GM10248 (cell line): ENCODE measurements at regions of chr2 and their contacts with region 1.

Region 1: DNA sequence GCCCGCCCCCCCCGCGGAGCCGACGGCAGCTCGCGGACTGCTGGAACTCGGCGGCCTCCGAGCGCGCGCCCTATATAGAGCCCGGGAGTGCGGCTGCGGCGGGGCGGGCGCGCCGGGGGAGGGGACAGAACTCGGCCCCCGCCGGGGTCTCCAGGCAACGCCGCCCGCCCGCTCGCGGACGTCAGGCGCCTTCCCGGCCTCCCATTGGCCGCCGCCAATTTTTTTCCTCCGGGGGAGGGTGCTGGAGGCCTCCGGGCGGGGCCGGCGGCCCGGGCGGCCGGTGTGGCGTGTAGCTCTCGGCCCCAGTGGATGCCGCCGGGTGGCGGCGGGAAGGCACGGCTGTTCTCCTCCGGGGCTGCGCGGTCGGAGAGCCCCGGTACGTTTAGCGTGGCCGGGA is at the start of gene ZFP36L2:
- DNase-seq: peak; percentile 96
- CTCF ChIP-seq: no peak

Region 2: DNA sequence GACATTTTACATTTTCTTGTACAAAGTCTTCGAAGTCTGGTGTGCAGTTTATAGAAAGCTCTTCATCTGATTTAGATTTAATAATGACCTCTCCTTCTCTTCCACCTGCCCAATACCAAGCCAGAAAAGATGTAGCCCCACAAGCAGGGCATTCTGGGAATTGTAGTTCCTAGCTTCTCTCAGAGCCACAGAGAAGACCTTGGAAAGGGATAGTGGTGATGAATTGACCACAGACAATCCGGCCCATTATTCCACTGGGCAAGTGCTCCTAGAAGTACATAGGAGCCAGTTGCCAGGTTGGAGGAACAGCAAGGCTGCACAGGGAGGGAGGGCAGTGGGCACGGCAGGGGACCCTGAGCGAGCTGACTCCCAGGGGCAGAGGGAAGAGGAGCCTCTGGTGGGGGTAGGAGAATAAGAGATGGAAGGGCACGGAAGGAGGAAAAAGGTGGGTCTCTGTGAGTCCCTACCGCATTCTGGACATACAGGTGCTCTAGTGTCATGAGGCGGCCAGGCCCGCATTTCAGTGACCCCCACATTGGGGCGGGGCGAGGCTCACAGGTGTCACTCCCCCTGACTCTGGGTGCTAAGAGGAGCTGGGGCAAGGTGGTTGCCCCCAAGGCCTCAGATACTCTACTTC is 281.7 kb before region 1 on chr2:
- CTCF ChIA-PET with region 1: interaction called, 39 read pairs
- POLR2A ChIA-PET with region 1: no interaction called
- DNase-seq: no peak
- CTCF ChIP-seq: no peak

Region 3: GRCh38 chr2:43131024-43131889 is 95.3 kb before region 1 on chr2:
- CTCF ChIA-PET with region 1: interaction called, 169 read pairs
- POLR2A ChIA-PET with region 1: no interaction called
- DNase-seq: peak; percentile 78
- CTCF ChIP-seq: peak; percentile 48

Region 4: GRCh38 chr2:43191947-43192516 is 34.5 kb before region 1 on chr2:
- CTCF ChIA-PET with region 1: interaction called, 13 read pairs
- POLR2A ChIA-PET with region 1: interaction called, 3 read pairs
- DNase-seq: no peak
- CTCF ChIP-seq: no peak

Region 5: DNA sequence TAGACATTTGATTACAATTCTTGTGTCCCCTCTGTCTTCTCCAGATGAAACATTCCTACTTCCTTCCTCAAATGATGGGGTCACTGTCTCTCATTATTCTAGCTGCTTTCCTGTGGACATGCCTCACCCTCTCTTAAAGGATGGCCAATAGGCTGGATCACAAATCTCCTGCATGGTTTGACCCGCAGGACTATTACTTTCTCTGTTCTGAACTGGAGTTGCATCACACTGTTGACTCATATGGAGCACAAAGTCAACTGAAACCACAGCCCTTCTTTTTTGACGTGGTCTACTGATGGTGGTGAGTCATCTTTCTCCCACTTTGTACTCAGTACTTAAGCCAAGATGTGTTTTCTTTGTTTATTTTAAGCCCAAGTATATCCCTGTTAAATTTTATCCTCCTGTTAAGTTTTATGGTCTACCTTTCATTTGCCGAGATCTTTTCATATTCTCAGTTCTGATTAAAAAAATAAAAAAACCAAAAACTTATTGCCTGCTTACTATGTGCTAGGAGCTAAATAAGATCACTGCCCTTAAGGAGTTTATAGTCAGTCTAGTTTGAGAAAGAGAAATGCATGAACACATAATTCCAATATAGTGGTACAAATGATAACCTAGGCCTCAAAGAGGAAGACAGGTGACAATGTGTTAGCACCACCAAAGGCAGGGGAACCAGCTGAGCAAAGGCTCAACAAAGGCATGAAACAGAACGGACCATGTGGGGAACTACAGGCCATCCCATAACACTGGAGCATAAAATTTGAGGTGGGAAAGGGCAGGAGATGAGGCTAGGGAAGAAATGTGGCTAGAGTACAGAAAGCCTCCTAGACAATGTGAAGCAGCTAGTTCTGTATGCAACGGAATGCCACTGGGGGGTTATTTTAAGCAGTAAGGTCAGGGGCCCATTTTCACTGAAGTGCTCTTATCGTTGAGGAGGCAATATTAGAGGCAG is 67.5 kb after region 1 on chr2:
- CTCF ChIA-PET with region 1: interaction called, 10 read pairs
- POLR2A ChIA-PET with region 1: interaction called, 4 read pairs
- DNase-seq: peak; percentile 84
- CTCF ChIP-seq: no peak

Region 6: GRCh38 chr2:43542285-43542937 is 315.9 kb after region 1 on chr2:
- CTCF ChIA-PET with region 1: interaction called, 15 read pairs
- POLR2A ChIA-PET with region 1: interaction called, 3 read pairs
- DNase-seq: peak; percentile 36
- CTCF ChIP-seq: peak; percentile 47